Right cardiac atrium (tissue), 5 donors: ENCODE measurements at regions of chr3 and their contacts with region 1.

Region 1: GRCh38 chr3:120558771-120559241 is 37.3 kb upstream of the NDUFB4 start:
- DNase-seq: peak; percentile 88 to 95 (median 94)
- ATAC-seq: peak; percentile 52 to 63
- H3K4me3 ChIP-seq: peak overlapping the region; percentile 60
- H3K27ac ChIP-seq: peak overlapping the region; percentile 95
- H3K4me1 ChIP-seq: peaks cover 5% of the 10 kb centered on the region
- H3K27me3 ChIP-seq: no peaks in the 10 kb centered on the region

Region 2: DNA sequence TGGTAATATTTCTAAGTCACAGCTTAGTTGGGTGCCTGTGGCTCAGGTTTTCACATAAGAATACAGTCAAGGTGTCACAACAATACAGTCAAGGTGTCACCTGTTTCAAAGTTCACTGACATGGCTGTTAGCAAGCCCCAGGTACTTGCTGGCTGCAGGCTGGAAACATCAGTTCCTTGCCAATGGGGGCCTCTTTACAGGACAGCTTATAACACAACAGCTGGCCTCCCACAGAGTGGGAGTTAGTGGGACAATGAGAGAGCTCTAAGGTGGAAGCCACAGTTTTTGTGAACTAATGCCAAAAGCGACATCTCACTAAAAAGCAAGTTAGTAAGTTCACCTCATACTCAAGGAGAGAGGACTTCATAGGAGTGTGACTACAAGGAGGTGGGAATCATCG is 319.2 kb before region 1 on chr3:
- intact Hi-C with region 1: loop called (anchors 2 to 10 kb)
- DNase-seq: no peak
- ATAC-seq: no peak
- H3K4me3 ChIP-seq: no peak overlapping the region
- H3K27ac ChIP-seq: no peak overlapping the region
- H3K4me1 ChIP-seq: no peaks in the 10 kb centered on the region
- H3K27me3 ChIP-seq: no peaks in the 10 kb centered on the region

Region 3: GRCh38 chr3:120311863-120312794 is 246.7 kb before region 1 on chr3:
- intact Hi-C with region 1: no loop called
- DNase-seq: peak in 1 of 3 donors; percentile 18
- ATAC-seq: no peak
- H3K4me3 ChIP-seq: no peak overlapping the region
- H3K27ac ChIP-seq: no peak overlapping the region
- H3K4me1 ChIP-seq: no peaks in the 10 kb centered on the region
- H3K27me3 ChIP-seq: no peaks in the 10 kb centered on the region

Region 4: DNA sequence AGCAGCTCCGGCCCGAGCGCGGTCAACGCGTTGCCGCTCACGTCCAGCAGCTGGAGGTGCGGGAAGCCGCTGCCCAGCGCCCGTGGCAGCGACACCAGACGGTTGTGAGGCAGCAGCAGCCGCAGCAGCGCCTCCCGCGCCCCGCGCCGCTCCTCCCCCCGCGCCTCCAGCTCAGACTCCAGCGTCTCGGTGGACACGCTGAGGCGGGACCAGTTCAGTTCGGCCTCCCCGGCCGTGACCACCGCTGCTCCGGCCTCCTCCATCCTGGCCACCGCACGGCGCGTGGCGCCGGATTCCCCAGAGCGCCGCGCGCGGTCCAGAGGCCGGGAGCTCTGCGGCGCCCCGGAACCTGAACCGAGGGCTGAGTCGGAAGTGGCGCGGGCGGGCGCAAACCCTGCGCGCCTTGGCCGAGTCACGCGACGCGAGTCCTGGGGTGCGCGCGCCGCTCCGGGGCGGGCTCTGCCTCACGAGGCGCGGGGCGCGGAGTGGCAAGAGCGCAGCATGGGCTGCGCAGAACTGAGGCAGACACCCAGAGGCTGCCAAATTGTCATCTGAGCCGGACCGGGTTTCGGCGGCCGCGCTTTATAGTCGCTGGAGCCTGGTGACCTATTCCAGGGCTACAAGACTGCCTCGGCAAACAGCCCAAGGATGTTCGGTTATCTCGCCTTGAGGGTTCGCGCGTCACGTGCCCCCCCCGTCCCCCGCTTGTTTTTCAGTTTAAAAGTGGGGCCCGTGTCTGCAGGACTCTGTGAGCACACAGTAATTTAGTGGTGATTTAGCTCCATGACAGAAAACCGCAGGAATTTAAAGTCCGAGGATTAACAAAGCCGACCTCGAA is 209.6 kb before region 1 on chr3 and contains the start of gene LRRC58:
- intact Hi-C with region 1: loop called in 1 of 4 experiments (anchors 10 kb)
- DNase-seq: peak; percentile 94 to 98 (median 97)
- ATAC-seq: peak; percentile 99
- H3K4me3 ChIP-seq: peak within 1 kb of the TSS; percentile 79
- H3K27ac ChIP-seq: peak within 1 kb of the TSS; percentile 67
- H3K4me1 ChIP-seq: no peaks in the 10 kb centered on the region
- H3K27me3 ChIP-seq: no peaks in the 10 kb centered on the region
- total RNA-seq, gene LRRC58: 10.3 to 14.6 (median 12.4) TPM

Region 5: GRCh38 chr3:120450600-120451271 is 108.1 kb before region 1 on chr3 and contains the start of gene FSTL1:
- intact Hi-C with region 1: loop called in 2 of 4 experiments (anchors 5 to 10 kb)
- DNase-seq: peak; percentile 84 to 91 (median 91)
- ATAC-seq: peak; percentile 86
- H3K4me3 ChIP-seq: peak within 1 kb of the TSS; percentile 63
- H3K27ac ChIP-seq: peak within 1 kb of the TSS; percentile 64
- H3K4me1 ChIP-seq: peaks cover 10% of the 10 kb centered on the region
- H3K27me3 ChIP-seq: no peaks in the 10 kb centered on the region
- total RNA-seq, gene FSTL1: 341 to 735 (median 465) TPM

Region 6: DNA sequence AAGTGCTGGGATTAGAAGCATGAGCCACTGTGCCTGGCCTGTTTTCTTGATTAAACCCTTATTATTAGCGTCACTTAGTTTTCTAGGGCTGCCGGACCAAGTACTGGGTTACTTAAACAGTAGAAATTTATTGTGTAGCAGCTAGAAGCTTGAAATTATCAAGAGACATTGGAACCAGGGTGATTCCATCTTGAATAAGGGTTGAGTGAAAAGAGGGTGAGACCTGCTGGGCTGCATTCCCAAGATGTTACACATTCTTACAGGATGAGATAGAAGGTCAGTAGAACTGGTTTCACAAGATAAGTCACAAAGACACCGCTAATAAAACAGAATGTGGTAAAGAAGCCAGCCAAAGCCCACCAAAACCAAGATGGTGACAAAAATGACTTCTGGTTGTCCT is 89.4 kb before region 1 on chr3:
- intact Hi-C with region 1: no loop called
- DNase-seq: no peak
- ATAC-seq: no peak
- H3K4me3 ChIP-seq: no peak overlapping the region
- H3K27ac ChIP-seq: no peak overlapping the region
- H3K4me1 ChIP-seq: peaks cover 5% of the 10 kb centered on the region
- H3K27me3 ChIP-seq: no peaks in the 10 kb centered on the region

Region 7: GRCh38 chr3:120634539-120634938 is 75.7 kb after region 1 on chr3:
- intact Hi-C with region 1: no loop called
- DNase-seq: no peak
- ATAC-seq: no peak
- H3K4me3 ChIP-seq: no peak overlapping the region
- H3K27ac ChIP-seq: no peak overlapping the region
- H3K4me1 ChIP-seq: no peaks in the 10 kb centered on the region
- H3K27me3 ChIP-seq: no peaks in the 10 kb centered on the region

Region 8: DNA sequence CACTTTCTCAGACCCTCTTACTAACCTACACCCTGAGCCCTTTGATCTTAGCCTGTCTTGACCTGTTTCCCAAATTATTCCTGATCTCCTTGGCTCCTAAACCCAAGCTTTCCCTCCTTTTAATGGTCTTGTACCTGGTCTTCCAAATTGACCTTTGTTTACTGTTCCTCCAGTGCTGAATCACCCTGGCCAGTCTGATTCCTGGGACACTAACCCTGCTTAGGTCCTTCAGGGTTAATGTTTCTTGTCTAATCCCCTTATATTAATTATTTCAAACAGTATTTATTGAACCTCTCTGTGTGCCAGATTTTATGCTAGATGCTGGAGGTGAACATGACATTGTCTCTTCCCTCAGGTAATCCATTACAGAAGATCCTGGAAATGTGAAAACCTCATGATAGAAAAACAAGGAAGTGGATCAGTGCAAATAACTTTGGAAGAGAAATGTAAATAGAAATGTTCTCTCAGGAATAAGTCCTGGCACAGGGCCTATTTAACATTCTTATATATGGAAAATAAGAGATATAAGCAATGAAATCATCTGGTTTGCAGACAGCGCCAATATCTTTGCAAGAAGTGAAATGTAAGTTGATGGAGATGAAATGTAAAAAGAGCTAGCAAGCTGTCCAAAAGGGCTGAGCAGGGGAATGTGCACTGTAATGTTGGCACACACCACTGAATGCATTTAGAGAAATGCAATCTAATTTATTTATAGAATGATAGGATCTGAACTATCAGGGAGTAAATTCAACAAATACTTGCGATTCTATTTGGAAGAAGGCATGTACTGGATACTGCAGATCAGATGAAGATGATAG is 102.5 kb after region 1 on chr3:
- intact Hi-C with region 1: no loop called
- DNase-seq: no peak
- ATAC-seq: no peak
- H3K4me3 ChIP-seq: no peak overlapping the region
- H3K27ac ChIP-seq: no peak overlapping the region
- H3K4me1 ChIP-seq: no peaks in the 10 kb centered on the region
- H3K27me3 ChIP-seq: no peaks in the 10 kb centered on the region

Region 9: GRCh38 chr3:120795017-120795648 is 236.3 kb after region 1 on chr3:
- intact Hi-C with region 1: loop called in 3 of 4 experiments (anchors 2 to 10 kb)
- DNase-seq: peak; percentile 74 to 92 (median 85)
- ATAC-seq: peak; percentile 81 to 89
- H3K4me3 ChIP-seq: no peak overlapping the region
- H3K27ac ChIP-seq: no peak overlapping the region
- H3K4me1 ChIP-seq: no peaks in the 10 kb centered on the region
- H3K27me3 ChIP-seq: no peaks in the 10 kb centered on the region